ENCODE measurements at regions of chr3 and their contacts with region 1.

Region 1: GRCh38 chr3:181726351-181727330 is 14.9 kb downstream of the SOX2 start:
- DNase-seq: no peak
- H3K4me3 ChIP-seq: peak overlapping the region in 2 of 3 experiments; percentile 9 to 56
- H3K27ac ChIP-seq: no peak overlapping the region
- H3K4me1 ChIP-seq: peaks cover 4% of the 10 kb centered on the region
- H3K27me3 ChIP-seq: peaks cover 94% of the 10 kb centered on the region
- CTCF ChIP-seq: no peak

Region 2: DNA sequence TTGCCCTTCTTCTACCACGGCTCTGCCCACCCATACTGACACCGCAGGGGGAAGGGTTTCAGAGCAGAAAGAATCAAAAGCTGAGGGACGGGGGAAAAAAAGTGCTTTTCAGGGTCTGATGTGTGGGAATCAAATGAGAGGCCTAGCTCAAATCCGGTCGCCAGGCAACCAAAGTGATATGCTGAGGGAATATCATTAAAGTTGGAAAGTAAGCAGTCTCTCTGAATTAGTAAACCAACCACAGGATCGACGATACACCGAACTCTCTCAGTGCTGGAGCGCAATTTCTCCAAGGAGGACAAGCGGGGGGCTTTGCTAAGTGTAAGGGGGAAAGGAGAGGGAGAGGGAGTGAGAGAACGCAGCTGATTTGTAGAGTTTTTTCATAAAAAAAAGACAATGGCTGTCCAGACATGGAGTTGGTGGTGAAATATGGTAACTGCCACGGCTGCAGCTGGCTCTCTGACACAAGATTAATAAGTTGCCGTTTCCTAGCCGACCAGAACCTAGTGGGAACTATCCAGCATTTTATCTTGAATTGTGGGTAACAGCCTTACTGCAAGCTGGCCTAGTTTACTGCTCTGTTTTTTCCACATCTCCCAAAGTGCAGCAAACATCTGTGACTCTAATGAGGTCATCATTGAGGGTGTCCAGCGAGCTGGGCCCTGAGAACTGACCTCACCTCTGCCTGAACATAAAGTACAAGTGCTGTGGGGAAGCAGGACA is 515.3 kb after region 1 on chr3:
- dilution Hi-C with region 1: loop called (anchors 25 kb)
- DNase-seq: no peak
- H3K4me3 ChIP-seq: no peak overlapping the region
- H3K27ac ChIP-seq: no peak overlapping the region
- H3K4me1 ChIP-seq: no peaks in the 10 kb centered on the region
- H3K27me3 ChIP-seq: no peaks in the 10 kb centered on the region
- CTCF ChIP-seq: no peak

Region 3: GRCh38 chr3:182268711-182269110 is 542.1 kb after region 1 on chr3:
- dilution Hi-C with region 1: no loop called
- DNase-seq: no peak
- H3K4me3 ChIP-seq: no peak overlapping the region
- H3K27ac ChIP-seq: no peak overlapping the region
- H3K4me1 ChIP-seq: no peaks in the 10 kb centered on the region
- H3K27me3 ChIP-seq: no peaks in the 10 kb centered on the region
- CTCF ChIP-seq: no peak

Measured in keratinocyte (primary cell).